ENCODE measurements at regions of chr22 and their contacts with region 1.

Region 1: DNA sequence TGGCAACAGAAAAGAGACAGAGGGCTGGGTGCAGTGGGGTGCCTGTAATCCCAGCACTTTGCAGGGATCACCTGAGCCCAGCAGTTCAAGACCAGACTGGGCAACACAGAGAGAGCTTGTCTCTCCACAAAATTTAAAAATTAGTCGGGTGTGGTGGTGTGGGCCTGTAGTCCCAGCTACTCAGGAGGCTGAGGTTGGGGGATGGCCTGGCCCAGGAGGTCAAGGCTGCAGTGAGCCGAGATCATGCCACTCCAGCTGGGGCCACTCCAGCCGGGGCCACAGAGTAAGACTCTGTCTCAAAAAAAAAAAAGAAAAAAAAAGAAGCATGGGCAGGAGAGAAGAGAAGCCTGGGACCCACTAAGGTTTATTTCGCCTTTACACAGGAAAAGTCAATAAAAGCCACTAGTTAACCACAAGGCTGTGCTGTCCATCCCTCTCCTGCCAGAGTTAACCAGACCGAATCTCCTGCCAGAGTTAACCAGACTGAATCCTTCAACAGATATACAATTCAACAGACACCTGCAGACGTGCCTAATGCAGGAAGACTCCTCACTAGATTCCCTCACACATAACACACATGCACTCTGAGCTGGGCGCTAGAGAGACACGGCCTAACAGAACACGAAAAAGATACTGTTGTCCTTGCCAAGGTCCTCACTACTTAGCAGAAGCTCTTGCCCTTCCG is 29.8 kb downstream of the MICAL3 start:
- DNase-seq: no peak
- ATAC-seq: no peak
- H3K4me3 ChIP-seq: no peak overlapping the region
- H3K27ac ChIP-seq: no peak overlapping the region
- H3K4me1 ChIP-seq: peaks cover 0 to 24% (median 9%) of the 10 kb centered on the region in 4 donors
- H3K27me3 ChIP-seq: no peaks in the 10 kb centered on the region
- CTCF ChIP-seq: no peak
- POLR2A ChIP-seq: no peak

Region 2: GRCh38 chr22:18068381-18068988 is 73.9 kb after region 1 on chr22:
- intact Hi-C with region 1: loop called in 1 of 2 experiments (anchors 5 kb)
- DNase-seq: peak in 1 of 3 donors; percentile 15
- ATAC-seq: peak in 1 of 4 donors; percentile 69
- H3K4me3 ChIP-seq: no peak overlapping the region
- H3K27ac ChIP-seq: peak overlapping the region in 1 of 3 donors; percentile 60
- H3K4me1 ChIP-seq: peaks cover 0 to 15% (median 3%) of the 10 kb centered on the region in 4 donors
- H3K27me3 ChIP-seq: no peaks in the 10 kb centered on the region
- CTCF ChIP-seq: no peak
- POLR2A ChIP-seq: no peak

Measured in right lobe of liver (tissue), 6 donors.